Ascending aorta (tissue), 2 donors: ENCODE measurements at regions of chr3 and their contacts with region 1.

Region 1: GRCh38 chr3:147881933-147882332 is 472.8 kb downstream of the ZIC1 start:
- DNase-seq: no peak
- H3K4me3 ChIP-seq: no peak overlapping the region
- H3K27ac ChIP-seq: no peak overlapping the region
- H3K4me1 ChIP-seq: no peaks in the 10 kb centered on the region
- H3K27me3 ChIP-seq: no peaks in the 10 kb centered on the region
- CTCF ChIP-seq: no peak

Region 2: GRCh38 chr3:146529021-146529420 is 1352.9 kb before region 1 on chr3:
- intact Hi-C with region 1: loop called (anchors 10 kb)
- DNase-seq: no peak
- H3K4me3 ChIP-seq: no peak overlapping the region
- H3K27ac ChIP-seq: no peak overlapping the region
- H3K4me1 ChIP-seq: no peaks in the 10 kb centered on the region
- H3K27me3 ChIP-seq: no peaks in the 10 kb centered on the region
- CTCF ChIP-seq: no peak